ENCODE measurements at regions of chr9 and their contacts with region 1.

Region 1: DNA sequence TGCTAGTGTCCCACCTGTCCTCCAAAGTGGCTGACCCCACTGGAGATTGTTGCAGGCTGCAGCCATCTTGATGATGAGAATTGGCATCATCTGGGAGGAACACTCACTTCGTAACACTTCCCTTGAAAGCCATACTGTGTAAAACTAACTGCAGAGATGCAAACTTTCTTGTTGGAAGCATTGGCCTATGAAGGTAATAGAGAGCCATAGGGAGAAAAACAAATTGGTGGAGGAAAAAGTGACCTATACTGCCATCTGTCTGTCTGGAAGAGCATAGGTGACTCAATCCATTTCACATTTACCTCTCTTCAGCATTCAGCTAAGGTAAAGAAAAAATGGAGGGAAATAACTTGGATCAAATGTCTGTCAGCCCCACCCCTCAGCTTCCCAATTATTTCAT is 473.4 kb downstream of the NTRK2 start:
- DNase-seq: no peak
- H3K4me3 ChIP-seq: no peak overlapping the region
- H3K27ac ChIP-seq: no peak overlapping the region
- H3K4me1 ChIP-seq: no peaks in the 10 kb centered on the region
- H3K27me3 ChIP-seq: no peaks in the 10 kb centered on the region
- CTCF ChIP-seq: peak; percentile 40 to 59 (median 51)
- EP300 ChIP-seq: no peak
- POLR2A ChIP-seq: no peak

Region 2: GRCh38 chr9:84953797-84954705 is 188.9 kb before region 1 on chr9:
- in situ Hi-C with region 1: loop called in 1 of 4 experiments (anchors 25 kb)
- intact Hi-C with region 1: no loop called
- DNase-seq: peak; percentile 89
- H3K4me3 ChIP-seq: no peak overlapping the region
- H3K27ac ChIP-seq: no peak overlapping the region
- H3K4me1 ChIP-seq: peaks cover 0 to 23% (median 2%) of the 10 kb centered on the region in 4 donors
- H3K27me3 ChIP-seq: no peaks in the 10 kb centered on the region
- CTCF ChIP-seq: peak; percentile 78 to 93 (median 93)
- EP300 ChIP-seq: no peak
- POLR2A ChIP-seq: no peak

Region 3: GRCh38 chr9:85079349-85079748 is 63.6 kb before region 1 on chr9:
- in situ Hi-C with region 1: no loop called
- intact Hi-C with region 1: no loop called
- DNase-seq: no peak
- H3K4me3 ChIP-seq: no peak overlapping the region
- H3K27ac ChIP-seq: no peak overlapping the region
- H3K4me1 ChIP-seq: no peaks in the 10 kb centered on the region
- H3K27me3 ChIP-seq: no peaks in the 10 kb centered on the region
- CTCF ChIP-seq: no peak
- EP300 ChIP-seq: no peak
- POLR2A ChIP-seq: no peak